Heart right ventricle (tissue), 16 donors: ENCODE measurements at regions of chr7 and their contacts with region 1.

Region 1: DNA sequence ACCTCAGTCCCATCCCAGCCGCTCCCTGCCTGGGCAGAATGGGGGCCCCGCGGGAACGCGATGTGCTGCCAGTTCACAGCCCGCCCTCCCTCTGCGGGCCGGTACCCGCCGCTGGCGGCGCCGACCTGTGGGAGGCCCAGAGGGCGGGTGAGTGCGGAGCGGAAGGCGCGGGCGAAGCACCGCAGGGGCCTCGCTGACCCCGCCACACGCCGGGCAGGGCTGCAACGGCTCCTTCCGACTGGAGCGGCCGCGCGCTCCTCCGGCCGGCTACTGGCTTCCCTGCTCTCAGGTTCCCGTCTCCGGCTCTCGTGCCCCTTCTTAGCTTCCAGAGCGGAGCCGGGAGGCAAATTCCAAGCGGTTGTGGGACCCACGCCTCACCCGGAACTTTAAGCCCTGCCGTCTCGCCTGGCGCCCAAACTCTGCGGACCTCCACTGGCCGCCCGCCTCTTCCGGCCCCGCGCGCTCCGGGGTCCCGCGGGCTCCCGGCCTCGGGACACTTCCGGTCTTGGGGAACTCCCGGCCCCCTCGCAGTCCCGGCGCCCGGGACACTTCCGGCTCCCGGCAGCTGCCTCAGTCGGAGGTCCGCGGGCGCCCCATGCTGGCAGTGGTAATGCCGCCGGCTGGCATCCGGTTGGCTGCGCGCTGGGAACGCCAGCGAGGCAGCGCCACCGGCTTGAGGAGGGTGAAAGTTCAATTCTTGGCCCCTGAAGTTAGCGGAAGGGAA is at the start of gene CYREN:
- DNase-seq: peak; percentile 93 to 96
- ATAC-seq: peak; percentile 95 to 97 (median 96)
- H3K4me3 ChIP-seq: peak within 1 kb of the TSS; percentile 71 to 98 (median 74)
- H3K27ac ChIP-seq: peak within 1 kb of the TSS; percentile 90 to 99 (median 96)
- H3K4me1 ChIP-seq: peaks cover 15 to 61% (median 47%) of the 10 kb centered on the region in 9 donors
- H3K27me3 ChIP-seq: no peaks in the 10 kb centered on the region
- CTCF ChIP-seq: peak; percentile 35 to 90 (median 72)
- total RNA-seq, gene CYREN: 16.0 to 33.3 (median 22.6) TPM

Region 2: GRCh38 chr7:134865001-134865845 is 305.2 kb before region 1 on chr7:
- intact Hi-C with region 1: loop called in 1 of 10 experiments (anchors 10 kb)
- DNase-seq: no peak
- ATAC-seq: peak; percentile 53 to 77 (median 72)
- H3K4me3 ChIP-seq: peak overlapping the region in 7 of 10 donors; percentile 17 to 38 (median 32)
- H3K27ac ChIP-seq: peak overlapping the region; percentile 25 to 85 (median 68)
- H3K4me1 ChIP-seq: peaks cover 0 to 63% (median 40%) of the 10 kb centered on the region in 9 donors
- H3K27me3 ChIP-seq: no peaks in the 10 kb centered on the region
- CTCF ChIP-seq: no peak

Region 3: DNA sequence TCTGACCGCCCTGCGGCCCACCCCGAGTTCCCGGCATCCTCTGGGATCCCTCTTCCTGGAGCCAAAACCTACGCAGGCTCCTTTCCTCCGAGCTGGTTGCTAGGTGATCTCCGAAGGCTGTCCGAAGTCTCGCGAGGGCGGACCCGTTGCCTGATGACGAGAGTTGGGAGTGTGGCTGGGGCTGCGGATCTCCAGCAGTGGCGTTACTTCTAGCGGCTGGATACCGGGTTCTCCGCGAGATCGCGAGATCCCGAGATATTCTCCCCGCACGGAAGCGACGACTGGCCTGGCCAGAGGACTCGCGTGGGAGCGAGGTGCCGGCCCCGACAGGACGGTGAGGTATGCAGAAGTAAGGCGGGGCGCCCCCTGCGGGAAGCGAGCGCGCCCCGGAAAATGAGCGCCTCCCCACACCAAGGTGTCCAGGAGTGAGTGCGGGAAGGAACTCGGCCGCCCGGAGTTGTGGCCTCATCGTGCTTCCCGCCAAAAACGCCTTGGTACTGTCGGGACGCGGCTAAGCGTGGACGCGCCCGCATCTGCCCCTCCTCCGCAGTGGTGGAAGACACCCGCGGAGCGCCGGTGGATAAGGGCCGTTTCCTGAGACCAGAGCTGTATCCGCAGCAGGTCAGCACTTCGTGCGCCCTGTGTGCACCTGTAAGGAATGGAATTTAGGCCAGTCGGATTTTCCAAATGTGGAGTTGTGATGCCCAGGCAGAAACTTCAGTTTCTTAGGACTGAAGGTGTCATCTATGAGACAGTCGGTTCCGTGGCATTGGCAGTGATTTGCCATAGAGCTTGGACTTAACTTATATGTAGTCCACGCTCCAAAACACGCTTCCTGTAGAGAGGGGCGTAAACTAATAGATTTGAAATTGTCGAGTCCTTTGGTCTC is 183.8 kb before region 1 on chr7 and contains the start of gene AGBL3:
- intact Hi-C with region 1: loop called in 9 of 10 experiments (anchors 1 to 10 kb)
- DNase-seq: peak; percentile 98
- ATAC-seq: peak; percentile 99 to 100 (median 99)
- H3K4me3 ChIP-seq: peak within 1 kb of the TSS; percentile 68 to 89 (median 84)
- H3K27ac ChIP-seq: peak within 1 kb of the TSS; percentile 79 to 94 (median 90)
- H3K4me1 ChIP-seq: peaks cover 0 to 37% (median 15%) of the 10 kb centered on the region in 9 donors
- H3K27me3 ChIP-seq: no peaks in the 10 kb centered on the region
- CTCF ChIP-seq: peak; percentile 37 to 89 (median 70)
- total RNA-seq, gene AGBL3: 0.64 to 2.6 (median 1.3) TPM

Region 4: GRCh38 chr7:134992626-134993179 is 177.7 kb before region 1 on chr7:
- intact Hi-C with region 1: loop called in 7 of 10 experiments (anchors 2 to 10 kb)
- DNase-seq: peak in 1 of 2 donors; percentile 32
- ATAC-seq: peak in 7 of 8 donors; percentile 53 to 75 (median 67)
- H3K4me3 ChIP-seq: no peak overlapping the region
- H3K27ac ChIP-seq: peak overlapping the region in 6 of 10 donors; percentile 21 to 63 (median 35)
- H3K4me1 ChIP-seq: peaks cover 0 to 43% (median 17%) of the 10 kb centered on the region in 9 donors
- H3K27me3 ChIP-seq: no peaks in the 10 kb centered on the region
- CTCF ChIP-seq: no peak

Region 5: DNA sequence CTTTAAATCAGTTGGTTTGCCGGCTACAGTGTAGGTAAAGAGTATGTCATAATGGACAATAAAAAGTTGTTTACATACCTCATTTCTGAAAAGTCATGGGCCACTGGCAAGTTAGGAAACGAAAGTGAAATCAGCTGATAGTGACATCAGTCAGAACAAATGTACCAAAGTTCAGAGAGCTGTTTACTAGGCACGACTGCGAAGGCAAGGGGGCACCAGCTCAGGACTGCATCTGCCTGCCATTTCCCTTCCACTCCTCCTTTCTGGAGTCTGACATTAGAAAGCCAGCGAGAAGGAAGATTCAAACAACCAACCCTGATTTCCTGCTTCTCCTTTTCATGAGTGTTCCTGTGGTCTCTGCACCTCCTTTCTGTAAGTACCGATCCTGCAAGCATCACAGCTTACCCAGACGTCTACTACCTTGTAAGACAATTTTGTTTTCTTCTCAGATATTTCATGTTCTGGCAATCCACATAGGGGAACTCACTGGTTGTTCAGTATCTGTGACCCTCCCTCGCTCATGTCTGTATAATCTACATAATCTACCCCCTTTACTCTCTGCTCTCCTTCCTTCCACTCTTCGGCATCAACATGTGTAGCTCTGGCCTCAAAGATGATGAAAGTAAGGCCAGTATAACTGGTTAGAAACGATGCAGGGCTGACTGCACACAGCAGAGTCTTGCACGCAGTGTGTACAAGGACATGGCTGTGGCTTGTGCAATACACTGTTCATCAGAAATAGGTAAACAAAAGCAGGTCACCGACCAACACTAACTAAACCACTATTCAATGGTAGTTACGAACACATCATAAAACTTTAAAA is 22.3 kb before region 1 on chr7 and contains the start of gene TMEM140:
- intact Hi-C with region 1: loop called in 2 of 10 experiments (anchors 1 to 2 kb)
- DNase-seq: peak in 1 of 2 donors; percentile 57
- ATAC-seq: peak; percentile 73 to 88 (median 80)
- H3K4me3 ChIP-seq: peak within 1 kb of the TSS; percentile 30 to 69 (median 62)
- H3K27ac ChIP-seq: peak within 1 kb of the TSS; percentile 87 to 97 (median 94)
- H3K4me1 ChIP-seq: peaks cover 6 to 80% (median 62%) of the 10 kb centered on the region in 9 donors
- H3K27me3 ChIP-seq: no peaks in the 10 kb centered on the region
- CTCF ChIP-seq: peak in 2 of 9 donors; percentile 23 to 34
- total RNA-seq, gene TMEM140: 15.7 to 74.1 (median 26.2) TPM

Region 6: GRCh38 chr7:135211179-135211945 is 40.9 kb after region 1 on chr7 and contains the start of gene WDR91:
- intact Hi-C with region 1: loop called in 1 of 10 experiments (anchors 2 kb)
- DNase-seq: peak; percentile 94 to 97
- ATAC-seq: peak; percentile 97 to 99 (median 98)
- H3K4me3 ChIP-seq: peak within 1 kb of the TSS; percentile 73 to 99 (median 86)
- H3K27ac ChIP-seq: peak within 1 kb of the TSS; percentile 62 to 93 (median 91)
- H3K4me1 ChIP-seq: peaks cover 0 to 33% (median 14%) of the 10 kb centered on the region in 9 donors
- H3K27me3 ChIP-seq: no peaks in the 10 kb centered on the region
- CTCF ChIP-seq: peak in 2 of 9 donors; percentile 17 to 35
- total RNA-seq, gene WDR91: 3.0 to 10.4 (median 5.9) TPM